GM12878 (cell line): ENCODE measurements at regions of chrX and their contacts with region 1.

Region 1: DNA sequence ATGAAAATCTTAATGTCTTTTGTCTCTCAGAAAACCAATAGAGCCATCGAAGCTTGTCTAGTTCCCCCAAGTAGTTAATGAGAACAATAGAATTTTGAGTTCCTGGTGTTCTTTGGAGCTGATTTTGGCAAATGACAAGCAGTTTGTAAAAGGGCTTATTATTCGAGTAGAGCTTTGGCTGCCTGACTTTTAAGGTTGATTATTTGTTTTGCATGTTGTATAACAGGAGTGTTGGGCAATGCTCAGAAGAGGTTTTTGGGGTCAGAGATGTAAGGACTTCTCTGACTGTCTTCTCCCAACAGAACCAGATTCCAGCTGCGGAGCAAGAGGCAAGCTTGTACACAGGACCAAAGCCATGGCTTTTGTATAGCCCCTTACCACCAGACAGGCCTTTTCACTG is 30.0 kb downstream of the ZCCHC12 start:
- DNase-seq: no peak
- ATAC-seq: no peak
- H3K4me3 ChIP-seq: no peak overlapping the region
- H3K27ac ChIP-seq: no peak overlapping the region
- H3K4me1 ChIP-seq: no peaks in the 10 kb centered on the region
- H3K27me3 ChIP-seq: peaks cover 0 to 2% of the 10 kb centered on the region in 2 experiments; a peak in 1 of 4 replicates
- CTCF ChIP-seq: no peak
- EP300 ChIP-seq: no peak
- POLR2A ChIP-seq: no peak
- RAD21 ChIP-seq: no peak

Region 2: GRCh38 chrX:118893923-118894322 is 40.3 kb after region 1 on chrX:
- CTCF ChIA-PET with region 1: no interaction called
- POLR2A ChIA-PET with region 1: no interaction called
- RAD21 ChIA-PET with region 1: no interaction called
- SMC1A ChIA-PET with region 1: no interaction called
- in situ Hi-C with region 1: no loop called
- intact Hi-C with region 1: no loop called
- DNase-seq: no peak
- ATAC-seq: no peak
- H3K4me3 ChIP-seq: no peak overlapping the region
- H3K27ac ChIP-seq: no peak overlapping the region
- H3K4me1 ChIP-seq: no peaks in the 10 kb centered on the region
- H3K27me3 ChIP-seq: no peaks in the 10 kb centered on the region
- CTCF ChIP-seq: no peak
- EP300 ChIP-seq: no peak
- POLR2A ChIP-seq: no peak
- RAD21 ChIP-seq: no peak

Region 3: DNA sequence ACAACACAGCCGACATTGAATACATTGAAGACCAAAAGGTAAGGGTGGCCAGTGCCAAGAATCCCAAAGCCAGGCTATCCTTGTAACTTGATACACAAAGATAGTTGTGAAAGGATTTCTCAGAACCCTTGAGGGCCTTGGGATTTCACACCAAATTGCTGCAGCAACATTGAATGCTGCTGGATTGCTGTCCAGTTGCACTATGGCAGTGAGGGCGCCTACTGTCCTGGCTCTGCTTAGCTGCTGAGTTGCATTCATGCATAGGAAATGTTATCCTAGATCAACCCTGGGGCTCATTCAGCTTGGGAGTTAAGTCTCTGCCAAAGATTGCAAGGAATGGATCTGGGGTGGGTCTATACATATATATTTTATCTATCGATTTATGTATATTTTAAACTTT is 159.6 kb after region 1 on chrX:
- CTCF ChIA-PET with region 1: interaction called, 19 read pairs
- POLR2A ChIA-PET with region 1: no interaction called
- RAD21 ChIA-PET with region 1: no interaction called
- SMC1A ChIA-PET with region 1: interaction called, 3 read pairs
- in situ Hi-C with region 1: loop called (anchors 5 kb)
- intact Hi-C with region 1: no loop called
- DNase-seq: no peak
- ATAC-seq: no peak
- H3K4me3 ChIP-seq: no peak overlapping the region
- H3K27ac ChIP-seq: no peak overlapping the region
- H3K4me1 ChIP-seq: peaks cover 12% of the 10 kb centered on the region
- H3K27me3 ChIP-seq: no peaks in the 10 kb centered on the region
- CTCF ChIP-seq: no peak
- EP300 ChIP-seq: no peak
- POLR2A ChIP-seq: no peak
- RAD21 ChIP-seq: no peak